ENCODE measurements at regions of chr7 and their contacts with region 1.

Region 1: GRCh38 chr7:43758029-43758821 is at the start of gene BLVRA:
- DNase-seq: peak; percentile 27 to 79
- H3K4me3 ChIP-seq: peak within 1 kb of the TSS; percentile 95 to 96
- H3K27ac ChIP-seq: peak within 1 kb of the TSS; percentile 63 to 87
- H3K4me1 ChIP-seq: peaks cover 0 to 13% of the 10 kb centered on the region in 2 donors
- H3K27me3 ChIP-seq: no peaks in the 10 kb centered on the region
- CTCF ChIP-seq: no peak
- total RNA-seq, gene BLVRA: 36.1 TPM

Region 2: GRCh38 chr7:43729214-43729923 is 28.9 kb before region 1 on chr7 and contains the start of gene COA1:
- intact Hi-C with region 1: loop called (anchors 1 kb)
- DNase-seq: peak; percentile 46 to 92
- H3K4me3 ChIP-seq: peak within 1 kb of the TSS; percentile 73 to 82
- H3K27ac ChIP-seq: peak within 1 kb of the TSS; percentile 69 to 88
- H3K4me1 ChIP-seq: peaks cover 9 to 10% of the 10 kb centered on the region in 2 donors
- H3K27me3 ChIP-seq: no peaks in the 10 kb centered on the region
- CTCF ChIP-seq: peak in 2 of 3 experiments; percentile 13 to 17
- total RNA-seq, gene COA1: 16.3 TPM